ENCODE measurements at regions of chr2 and their contacts with region 1.

Region 1: GRCh38 chr2:216925636-216926366 is 65.9 kb upstream of the TNP1 start:
- DNase-seq: no peak
- ATAC-seq: no peak
- H3K4me3 ChIP-seq: no peak overlapping the region
- H3K27ac ChIP-seq: no peak overlapping the region
- H3K4me1 ChIP-seq: no peaks in the 10 kb centered on the region
- H3K27me3 ChIP-seq: no peaks in the 10 kb centered on the region
- CTCF ChIP-seq: no peak

Region 2: DNA sequence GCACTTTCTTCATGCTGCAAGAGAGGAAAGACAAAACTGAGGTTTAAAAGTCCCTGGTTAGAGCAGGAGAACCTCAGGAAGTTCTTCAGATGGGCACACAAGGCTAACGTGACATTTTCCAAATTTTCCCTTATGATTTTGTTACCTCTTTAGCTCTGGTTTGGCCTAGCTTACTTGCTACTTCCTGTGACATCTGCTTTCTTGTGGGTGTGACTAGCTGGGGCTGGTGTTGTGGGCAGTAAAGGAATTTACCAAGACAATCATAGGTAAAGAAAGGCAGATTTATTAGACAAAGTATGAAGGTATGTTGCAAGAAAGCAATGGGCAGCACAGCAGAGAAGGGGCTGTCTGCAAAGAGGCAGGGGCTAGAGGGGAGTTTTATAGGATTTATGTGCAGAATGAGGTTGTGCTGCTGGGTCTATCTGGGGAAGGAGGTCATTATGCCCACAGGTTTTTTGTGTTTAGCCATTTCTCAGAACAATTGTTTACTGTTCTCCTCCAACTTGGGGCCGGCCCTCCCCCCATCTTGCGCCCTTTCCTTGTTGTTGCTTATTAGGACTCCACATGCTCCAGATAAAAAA is 59.2 kb before region 1 on chr2:
- intact Hi-C with region 1: loop called in 1 of 10 experiments (anchors 5 kb)
- DNase-seq: no peak
- ATAC-seq: no peak
- H3K4me3 ChIP-seq: no peak overlapping the region
- H3K27ac ChIP-seq: no peak overlapping the region
- H3K4me1 ChIP-seq: peaks cover 0 to 10% (median 0%) of the 10 kb centered on the region in 9 donors
- H3K27me3 ChIP-seq: no peaks in the 10 kb centered on the region
- CTCF ChIP-seq: no peak

Region 3: GRCh38 chr2:217086038-217086522 is 160.3 kb after region 1 on chr2:
- intact Hi-C with region 1: no loop called
- DNase-seq: no peak
- ATAC-seq: peak in 3 of 8 donors; percentile 47 to 66 (median 53)
- H3K4me3 ChIP-seq: no peak overlapping the region
- H3K27ac ChIP-seq: peak overlapping the region in 3 of 10 donors; percentile 26 to 58 (median 38)
- H3K4me1 ChIP-seq: peaks cover 0 to 28% (median 8%) of the 10 kb centered on the region in 9 donors
- H3K27me3 ChIP-seq: no peaks in the 10 kb centered on the region
- CTCF ChIP-seq: no peak